Activated naive CD4-positive, alpha-beta T cell treated with anti-CD3 and anti-CD28 coated beads for 36 hours (primary cell): ENCODE measurements at regions of chr12 and their contacts with region 1.

Region 1: DNA sequence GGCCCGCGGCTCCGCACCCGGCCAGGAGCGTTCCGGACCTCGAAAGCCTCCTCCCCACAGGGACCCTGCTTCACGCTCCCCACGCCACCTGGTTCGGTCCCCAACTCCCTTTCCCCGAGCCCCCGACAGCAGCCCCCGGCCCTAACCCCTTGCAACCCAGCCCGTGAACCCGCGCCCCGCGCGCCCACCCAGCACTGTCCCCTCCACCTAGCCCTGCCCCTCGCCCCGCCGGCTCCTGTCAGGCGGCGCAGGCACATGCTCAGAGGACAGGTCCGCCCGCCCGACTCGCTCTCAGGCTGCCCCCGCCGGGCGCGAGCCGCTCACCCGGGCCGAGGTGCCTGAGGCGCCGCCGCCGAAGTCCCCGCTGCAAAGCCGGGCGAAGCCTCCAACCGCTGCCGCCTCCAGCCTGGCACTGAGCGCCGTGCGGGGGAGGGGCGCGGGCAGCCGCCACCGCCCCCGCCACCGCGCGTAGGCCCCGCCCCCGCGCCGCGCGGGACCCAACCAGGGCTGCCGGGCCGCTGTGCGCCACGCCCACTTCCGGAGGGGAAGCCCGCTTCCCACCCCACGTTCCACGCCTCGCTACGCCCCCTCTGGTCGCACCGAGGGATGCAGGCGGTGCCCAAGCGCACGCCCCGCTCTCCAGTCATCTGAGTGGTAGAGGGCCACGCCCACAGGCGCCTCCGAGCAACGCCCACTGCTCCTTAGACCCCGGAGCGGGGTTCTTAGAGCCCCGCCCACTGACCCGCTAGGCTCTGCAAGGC is at the start of gene CORO1C:
- DNase-seq: peak; percentile 96
- H3K4me3 Mint-ChIP-seq: peak within 1 kb of the TSS; percentile 89
- H3K27ac Mint-ChIP-seq: peak within 1 kb of the TSS; percentile 87
- H3K4me1 Mint-ChIP-seq: peaks cover 29% of the 10 kb centered on the region
- H3K27me3 Mint-ChIP-seq: no peaks in the 10 kb centered on the region
- total RNA-seq, gene CORO1C: 36.4 to 43.7 TPM

Region 2: DNA sequence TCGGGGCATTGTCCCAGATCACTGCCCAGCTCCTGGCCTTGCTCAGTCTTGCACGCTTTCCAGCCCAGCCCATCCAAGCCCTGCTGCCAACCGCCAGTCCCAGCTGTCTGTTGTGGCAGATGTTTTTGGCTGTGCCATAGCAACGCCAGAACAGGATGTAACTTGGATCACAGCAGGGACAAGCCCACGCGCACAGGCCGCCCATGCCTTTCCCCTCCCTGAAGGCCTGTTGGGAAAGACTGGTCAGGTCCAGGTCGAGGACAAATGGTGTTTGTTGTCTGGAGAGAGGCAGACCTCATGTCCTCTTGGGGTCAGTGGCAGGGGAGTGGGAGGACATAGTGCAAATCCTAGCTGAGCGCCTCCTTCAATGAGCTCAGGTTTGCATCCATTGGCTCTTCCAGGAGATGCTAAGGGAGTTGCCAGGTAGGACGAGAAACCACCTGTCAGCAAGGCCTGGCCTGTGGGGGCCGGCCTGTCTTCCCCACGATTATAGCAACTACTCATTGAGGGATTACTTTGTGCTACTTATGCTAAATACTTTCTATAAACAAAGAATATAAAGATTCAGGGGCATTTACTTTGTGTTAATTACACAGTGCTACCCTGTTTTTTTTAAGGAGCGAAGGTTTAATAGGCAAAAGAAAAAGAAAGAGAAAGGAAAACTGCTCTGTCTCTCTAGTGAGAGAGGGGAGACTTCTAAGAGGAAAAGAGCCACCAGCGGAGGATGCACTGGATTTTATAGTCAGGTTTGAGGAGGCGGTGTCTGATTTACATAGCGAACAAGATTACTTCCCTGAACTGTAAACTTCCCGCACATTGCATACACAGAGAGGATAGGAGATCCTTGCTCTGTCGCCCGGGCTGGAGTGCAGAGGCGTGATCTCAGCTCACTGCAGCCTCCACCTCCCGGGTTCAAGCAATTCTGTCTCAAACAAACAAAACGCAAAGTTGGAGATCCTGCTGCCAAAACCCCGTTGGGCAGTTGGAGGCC is 42.8 kb after region 1 on chr12:
- CTCF ChIA-PET with region 1: no interaction called
- intact Hi-C with region 1: no loop called
- DNase-seq: no peak
- H3K4me3 Mint-ChIP-seq: no peak overlapping the region
- H3K27ac Mint-ChIP-seq: no peak overlapping the region
- H3K4me1 Mint-ChIP-seq: no peaks in the 10 kb centered on the region
- H3K27me3 Mint-ChIP-seq: peaks cover 4% of the 10 kb centered on the region

Region 3: GRCh38 chr12:108803428-108804105 is 72.3 kb after region 1 on chr12:
- CTCF ChIA-PET with region 1: interaction called, 8 read pairs
- intact Hi-C with region 1: loop called (anchors 2 kb)
- DNase-seq: peak; percentile 83
- H3K4me3 Mint-ChIP-seq: no peak overlapping the region
- H3K27ac Mint-ChIP-seq: peak overlapping the region; percentile 76
- H3K4me1 Mint-ChIP-seq: peaks cover 7% of the 10 kb centered on the region
- H3K27me3 Mint-ChIP-seq: no peaks in the 10 kb centered on the region

Region 4: GRCh38 chr12:108856428-108857157 is 125.3 kb after region 1 on chr12:
- CTCF ChIA-PET with region 1: no interaction called
- intact Hi-C with region 1: loop called (anchors 2 kb)
- DNase-seq: peak; percentile 74
- H3K4me3 Mint-ChIP-seq: peak overlapping the region; percentile 92
- H3K27ac Mint-ChIP-seq: peak overlapping the region; percentile 75
- H3K4me1 Mint-ChIP-seq: peaks cover 40% of the 10 kb centered on the region
- H3K27me3 Mint-ChIP-seq: no peaks in the 10 kb centered on the region

Region 5: GRCh38 chr12:109052414-109053323 is 321.4 kb after region 1 on chr12 and contains the start of gene USP30:
- CTCF ChIA-PET with region 1: no interaction called
- intact Hi-C with region 1: loop called (anchors 2 kb)
- DNase-seq: peak; percentile 87
- H3K4me3 Mint-ChIP-seq: peak within 1 kb of the TSS; percentile 84
- H3K27ac Mint-ChIP-seq: peak within 1 kb of the TSS; percentile 96
- H3K4me1 Mint-ChIP-seq: peaks cover 8% of the 10 kb centered on the region
- H3K27me3 Mint-ChIP-seq: no peaks in the 10 kb centered on the region
- total RNA-seq, gene USP30: 11.0 to 11.5 TPM